ENCODE measurements at regions of chr2 and their contacts with region 1.

Region 1: GRCh38 chr2:12303181-12304030 is 413.3 kb upstream of the TRIB2 start:
- DNase-seq: no peak
- H3K4me3 ChIP-seq: no peak overlapping the region
- H3K27ac ChIP-seq: no peak overlapping the region
- H3K4me1 ChIP-seq: peaks cover 12% of the 10 kb centered on the region
- H3K27me3 ChIP-seq: no peaks in the 10 kb centered on the region
- CTCF ChIP-seq: no peak

Region 2: DNA sequence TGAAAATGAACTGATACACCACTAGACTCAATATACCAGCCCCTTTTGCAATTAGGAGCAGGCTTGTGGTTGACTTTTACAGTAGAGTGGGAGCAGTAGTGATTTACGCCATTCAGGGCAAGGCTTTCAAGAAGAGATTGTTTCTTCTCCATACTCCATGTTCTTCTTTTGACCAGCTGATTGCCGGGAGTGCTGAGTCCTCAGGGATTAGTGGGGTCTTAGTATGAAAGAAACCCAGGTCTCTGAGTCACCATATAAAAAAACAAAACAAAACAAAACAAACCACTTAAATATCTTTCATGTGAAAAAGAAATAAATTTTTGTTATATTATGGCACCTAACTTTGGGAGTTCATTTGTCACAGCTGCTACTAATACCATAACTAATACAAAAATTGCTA is 52.3 kb before region 1 on chr2:
- CTCF ChIA-PET with region 1: no interaction called
- dilution Hi-C with region 1: no loop called
- in situ Hi-C with region 1: no loop called
- intact Hi-C with region 1: no loop called
- DNase-seq: no peak
- H3K4me3 ChIP-seq: no peak overlapping the region
- H3K27ac ChIP-seq: no peak overlapping the region
- H3K4me1 ChIP-seq: no peaks in the 10 kb centered on the region
- H3K27me3 ChIP-seq: no peaks in the 10 kb centered on the region
- CTCF ChIP-seq: no peak

Region 3: GRCh38 chr2:13014783-13015182 is 711.4 kb after region 1 on chr2:
- CTCF ChIA-PET with region 1: no interaction called
- dilution Hi-C with region 1: loop called (anchors 5 kb)
- in situ Hi-C with region 1: no loop called
- intact Hi-C with region 1: no loop called
- DNase-seq: no peak
- H3K4me3 ChIP-seq: no peak overlapping the region
- H3K27ac ChIP-seq: no peak overlapping the region
- H3K4me1 ChIP-seq: no peaks in the 10 kb centered on the region
- H3K27me3 ChIP-seq: no peaks in the 10 kb centered on the region
- CTCF ChIP-seq: no peak

Measured in mammary epithelial cell (primary cell).